ENCODE measurements at regions of chr17 and their contacts with region 1.

Region 1: GRCh38 chr17:60743799-60744198 is 66.1 kb downstream of the BCAS3 start:
- DNase-seq: peak; percentile 48 to 92
- H3K4me3 ChIP-seq: peak overlapping the region; percentile 44
- H3K27ac ChIP-seq: peak overlapping the region; percentile 96
- H3K4me1 ChIP-seq: peaks cover 21% of the 10 kb centered on the region
- H3K27me3 ChIP-seq: no peaks in the 10 kb centered on the region
- CTCF ChIP-seq: no peak

Region 2: GRCh38 chr17:60863892-60864707 is 120.3 kb after region 1 on chr17:
- CTCF ChIA-PET with region 1: no interaction called
- POLR2A ChIA-PET with region 1: interaction called, 11 read pairs
- intact Hi-C with region 1: no loop called
- DNase-seq: no peak
- H3K4me3 ChIP-seq: no peak overlapping the region
- H3K27ac ChIP-seq: no peak overlapping the region
- H3K4me1 ChIP-seq: no peaks in the 10 kb centered on the region
- H3K27me3 ChIP-seq: no peaks in the 10 kb centered on the region
- CTCF ChIP-seq: no peak

Region 3: GRCh38 chr17:61206922-61207321 is 463.1 kb after region 1 on chr17:
- CTCF ChIA-PET with region 1: no interaction called
- POLR2A ChIA-PET with region 1: interaction called, 22 read pairs
- intact Hi-C with region 1: no loop called
- DNase-seq: no peak
- H3K4me3 ChIP-seq: no peak overlapping the region
- H3K27ac ChIP-seq: no peak overlapping the region
- H3K4me1 ChIP-seq: no peaks in the 10 kb centered on the region
- H3K27me3 ChIP-seq: no peaks in the 10 kb centered on the region
- CTCF ChIP-seq: no peak

Region 4: DNA sequence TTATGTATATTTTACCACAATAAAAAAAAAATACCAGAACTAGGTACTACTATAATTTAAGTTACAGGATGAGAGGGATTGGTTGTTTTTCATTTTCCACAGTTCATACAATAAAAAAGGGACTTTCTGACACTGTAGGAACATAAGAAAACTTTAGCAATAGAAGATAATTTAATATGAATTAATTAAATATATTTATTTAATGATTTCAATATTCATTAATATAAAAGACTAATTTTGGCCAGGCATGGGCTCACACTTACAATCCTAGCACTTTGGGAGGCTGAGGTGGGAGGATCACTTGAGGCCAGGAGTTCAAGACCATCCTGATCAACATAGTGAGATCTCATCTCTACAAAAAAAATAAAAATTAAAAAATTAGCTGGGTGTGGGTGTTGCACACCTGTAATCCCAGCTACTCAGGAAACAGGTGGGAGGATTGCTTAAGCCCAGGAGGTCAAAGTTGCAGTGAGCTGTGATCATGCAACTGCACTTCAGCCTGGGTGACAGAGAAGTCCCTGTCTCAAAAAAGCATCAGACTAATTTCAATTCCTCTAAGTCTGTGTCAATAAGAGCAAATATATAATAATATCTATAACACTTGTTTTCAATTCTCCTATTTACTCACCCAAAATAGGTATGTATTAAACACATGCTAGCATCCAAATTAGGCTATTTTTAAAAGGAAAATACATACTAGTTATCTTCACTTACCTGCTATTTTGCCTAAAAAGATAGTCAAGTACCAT is 1039.9 kb after region 1 on chr17:
- CTCF ChIA-PET with region 1: no interaction called
- POLR2A ChIA-PET with region 1: no interaction called
- intact Hi-C with region 1: no loop called
- DNase-seq: no peak
- H3K4me3 ChIP-seq: no peak overlapping the region
- H3K27ac ChIP-seq: no peak overlapping the region
- H3K4me1 ChIP-seq: no peaks in the 10 kb centered on the region
- H3K27me3 ChIP-seq: no peaks in the 10 kb centered on the region
- CTCF ChIP-seq: no peak

Region 5: GRCh38 chr17:61837175-61838051 is 1093.6 kb after region 1 on chr17:
- CTCF ChIA-PET with region 1: no interaction called
- POLR2A ChIA-PET with region 1: no interaction called
- intact Hi-C with region 1: loop called (anchors 10 kb)
- DNase-seq: peak in 1 of 2 experiments; percentile 48
- H3K4me3 ChIP-seq: no peak overlapping the region
- H3K27ac ChIP-seq: no peak overlapping the region
- H3K4me1 ChIP-seq: peaks cover 25% of the 10 kb centered on the region
- H3K27me3 ChIP-seq: no peaks in the 10 kb centered on the region
- CTCF ChIP-seq: peak; percentile 87

Measured in PC-9 (cell line).